Stomach (tissue), 19 donors: ENCODE measurements at regions of chr16 and their contacts with region 1.

Region 1: GRCh38 chr16:30914830-30915229 is 8.5 kb upstream of the FBXL19 start:
- DNase-seq: no peak
- H3K4me3 ChIP-seq: no peak overlapping the region
- H3K27ac ChIP-seq: no peak overlapping the region
- H3K4me1 ChIP-seq: no peaks in the 10 kb centered on the region
- H3K27me3 ChIP-seq: no peaks in the 10 kb centered on the region
- CTCF ChIP-seq: no peak
- EP300 ChIP-seq: no peak
- POLR2A ChIP-seq: no peak

Region 2: DNA sequence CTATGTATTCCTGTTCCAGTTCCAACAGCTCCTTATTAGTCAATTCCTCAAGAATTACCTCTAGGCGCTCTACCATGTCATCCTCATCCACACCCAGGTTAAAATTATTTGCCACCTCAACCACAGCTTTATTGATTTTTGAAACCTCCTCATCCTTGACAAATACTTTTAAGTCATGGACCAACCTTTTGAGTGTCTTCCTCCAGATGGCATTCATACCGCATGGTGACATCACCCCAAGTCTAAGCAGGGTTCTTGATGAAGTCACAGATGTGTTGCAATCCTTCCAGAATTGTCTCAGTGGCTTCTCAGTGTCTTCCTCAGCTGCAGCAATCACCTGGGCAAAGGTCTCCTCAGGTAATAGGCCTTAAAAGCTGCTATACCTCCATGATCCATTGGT is 61.1 kb before region 1 on chr16:
- intact Hi-C with region 1: loop called (anchors 5 kb)
- DNase-seq: no peak
- H3K4me3 ChIP-seq: no peak overlapping the region
- H3K27ac ChIP-seq: no peak overlapping the region
- H3K4me1 ChIP-seq: no peaks in the 10 kb centered on the region
- H3K27me3 ChIP-seq: no peaks in the 10 kb centered on the region
- CTCF ChIP-seq: no peak
- EP300 ChIP-seq: no peak
- POLR2A ChIP-seq: no peak